ENCODE measurements at regions of chr18 and their contacts with region 1.

Region 1: DNA sequence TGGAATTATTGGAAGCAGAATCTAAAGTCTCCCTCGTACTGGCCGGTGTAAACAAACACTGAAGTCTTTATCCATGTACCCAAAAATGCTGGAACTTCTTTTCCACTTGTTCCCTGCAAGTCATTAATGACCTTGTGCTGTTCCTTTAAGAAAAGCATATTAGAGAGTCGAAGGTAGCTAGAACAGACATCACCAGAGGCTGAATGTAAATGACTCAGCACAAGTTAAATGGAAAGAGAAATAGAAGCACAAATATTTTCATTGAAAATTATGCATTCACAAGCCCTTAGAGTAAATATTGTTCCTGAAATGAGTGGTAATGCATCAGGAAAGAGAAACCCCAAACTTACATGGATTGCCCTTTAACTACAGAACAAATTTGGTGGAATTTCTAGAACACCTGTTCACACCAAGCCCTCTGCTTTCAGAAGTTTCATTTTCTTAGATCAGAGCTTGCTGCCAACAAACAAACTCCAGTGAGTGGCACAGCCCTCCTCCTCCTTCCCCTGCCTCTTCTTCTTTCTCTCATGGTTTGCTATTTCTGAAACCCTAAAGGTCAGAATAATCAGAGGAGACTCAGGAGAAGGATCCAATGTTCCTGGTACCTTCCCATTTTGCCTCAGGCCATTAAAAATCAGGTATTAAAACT is 264.3 kb downstream of the TXNL1 start:
- DNase-seq: peak; percentile 26
- ATAC-seq: peak; percentile 54; the same call in 1 of the 2 replicates
- H3K4me3 ChIP-seq: no peak overlapping the region
- H3K27ac ChIP-seq: no peak overlapping the region; the same call in 1 of the 2 replicates
- H3K4me1 ChIP-seq: no peaks in the 10 kb centered on the region
- H3K27me3 ChIP-seq: no peaks in the 10 kb centered on the region
- CTCF ChIP-seq: no peak
- POLR2A ChIP-seq: no peak
- RAD21 ChIP-seq: no peak

Region 2: DNA sequence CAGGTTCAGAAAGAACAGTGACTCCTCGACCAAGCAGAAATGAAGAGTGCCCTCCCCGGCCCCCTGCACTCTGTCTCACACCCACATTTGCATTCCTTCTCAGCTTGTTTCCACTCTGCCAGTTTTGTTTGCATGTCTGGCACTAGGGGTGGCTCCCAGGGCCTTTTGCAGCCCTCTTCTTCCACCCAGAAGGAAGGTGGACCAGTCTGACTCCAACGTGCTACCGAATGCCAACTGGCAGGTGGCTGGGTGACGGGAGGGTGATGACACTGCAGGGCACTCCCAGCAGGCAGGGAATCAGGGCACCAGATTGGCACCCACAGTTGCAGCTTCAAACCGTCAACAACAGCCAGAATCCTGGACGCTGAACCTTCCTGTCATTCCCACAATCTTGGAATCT is 106.8 kb before region 1 on chr18:
- CTCF ChIA-PET with region 1: no interaction called
- POLR2A ChIA-PET with region 1: no interaction called
- dilution Hi-C with region 1: no loop called
- in situ Hi-C with region 1: no loop called
- intact Hi-C with region 1: loop called (anchors 10 kb)
- DNase-seq: no peak
- ATAC-seq: no peak
- H3K4me3 ChIP-seq: no peak overlapping the region
- H3K27ac ChIP-seq: no peak overlapping the region
- H3K4me1 ChIP-seq: no peaks in the 10 kb centered on the region
- H3K27me3 ChIP-seq: no peaks in the 10 kb centered on the region
- CTCF ChIP-seq: no peak
- POLR2A ChIP-seq: no peak
- RAD21 ChIP-seq: no peak